GM13977 (cell line): ENCODE measurements at regions of chr12 and their contacts with region 1.

Region 1: DNA sequence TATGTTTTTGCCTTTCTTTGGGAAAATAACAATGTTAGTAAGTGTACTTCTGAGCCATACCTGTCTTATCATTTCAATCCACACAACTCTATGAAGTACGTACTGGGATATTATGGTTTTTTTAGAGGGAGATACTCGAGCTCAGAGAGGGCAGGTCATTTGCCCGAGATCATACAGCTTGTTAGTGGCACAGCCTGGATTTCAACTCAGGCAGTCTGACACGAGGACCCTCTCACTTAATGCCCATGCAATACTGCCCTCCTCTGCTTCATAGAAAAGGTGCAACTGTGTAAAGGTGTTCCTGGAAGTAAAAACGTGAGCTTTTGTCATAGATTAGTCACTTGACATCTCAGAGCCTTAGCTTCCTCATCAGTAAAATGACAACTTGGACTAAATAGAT is 128.0 kb downstream of the NDUFA12 start:
- DNase-seq: peak; percentile 71
- CTCF ChIP-seq: peak; percentile 72

Region 2: DNA sequence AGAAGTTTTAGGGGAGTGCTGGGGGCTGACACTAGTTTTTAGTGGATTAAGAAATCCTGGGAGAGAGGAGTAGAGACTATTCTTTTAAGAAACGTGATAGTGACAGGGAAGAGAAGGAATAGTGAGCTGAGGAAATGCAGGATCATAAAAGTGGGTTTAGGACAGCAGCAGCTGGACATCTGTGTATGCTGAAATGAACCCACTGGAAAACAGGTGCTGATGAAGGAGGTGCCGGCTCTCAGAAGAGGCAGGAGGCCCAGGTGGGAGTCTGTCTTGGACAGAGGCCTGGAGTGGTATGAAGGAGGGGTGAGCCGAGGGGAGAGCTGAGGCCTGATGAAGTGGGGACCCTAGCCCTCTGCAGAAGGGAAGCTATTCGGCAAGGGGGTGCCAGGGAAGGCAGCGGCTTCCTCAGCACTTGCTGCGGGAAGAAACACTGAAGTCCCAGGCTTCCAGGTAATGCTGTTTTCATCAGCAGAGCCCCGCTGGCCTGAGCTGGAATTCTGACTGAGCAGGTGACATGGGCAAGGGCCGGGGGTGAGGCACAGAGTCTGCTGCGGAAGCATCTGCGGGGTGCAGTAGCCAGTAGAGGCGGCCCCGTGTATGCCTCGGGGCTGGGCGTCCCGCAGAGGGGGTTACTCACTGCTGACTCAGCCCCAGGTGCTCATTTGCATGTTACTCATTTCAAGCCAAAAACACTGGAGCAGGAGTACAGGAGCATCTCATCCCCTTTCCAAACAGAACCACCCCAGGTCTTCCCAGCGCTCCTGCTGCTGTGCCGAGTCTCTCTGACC is 314.9 kb before region 1 on chr12:
- in situ Hi-C with region 1: loop called (anchors 25 kb)
- DNase-seq: peak; percentile 60
- CTCF ChIP-seq: peak; percentile 2

Region 3: GRCh38 chr12:94817695-94818075 is 57.8 kb before region 1 on chr12:
- in situ Hi-C with region 1: loop called (anchors 5 kb)
- DNase-seq: no peak
- CTCF ChIP-seq: no peak

Region 4: DNA sequence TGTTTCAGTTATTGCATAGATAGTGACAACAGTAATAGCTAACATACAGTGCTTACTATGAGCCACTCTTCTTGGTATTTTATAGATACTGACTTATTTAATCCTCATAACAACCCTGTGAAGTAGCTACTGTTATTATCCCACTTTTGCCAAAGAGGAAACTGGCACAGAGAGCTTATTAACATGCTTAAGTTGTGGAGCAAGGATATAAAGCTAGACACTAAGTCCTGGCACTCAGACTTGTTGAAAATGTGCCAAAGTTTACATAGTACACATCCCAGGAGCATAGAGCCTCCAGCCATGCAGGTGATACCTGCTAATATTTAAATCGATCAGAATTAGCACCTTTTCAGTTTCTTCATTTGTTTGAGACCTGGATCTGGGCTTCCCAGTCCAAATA is 383.8 kb after region 1 on chr12:
- in situ Hi-C with region 1: no loop called
- DNase-seq: no peak
- CTCF ChIP-seq: no peak